Activated naive CD8-positive, alpha-beta T cell treated with anti-CD3 and anti-CD28 coated beads, Interleukin-2, amount 10 ng/mL, durations not matched to agents 7 days and 5 days (primary cell): ENCODE measurements at regions of chr10 and their contacts with region 1.

Region 1: GRCh38 chr10:100998991-100999741 is 442 bp upstream of the LZTS2 start:
- DNase-seq: peak; percentile 92
- ATAC-seq: peak; percentile 61
- H3K4me3 Mint-ChIP-seq: peak overlapping the region; percentile 88
- H3K27ac Mint-ChIP-seq: peak overlapping the region; percentile 94
- H3K4me1 Mint-ChIP-seq: peaks cover 19% of the 10 kb centered on the region
- H3K27me3 Mint-ChIP-seq: no peaks in the 10 kb centered on the region

Region 2: GRCh38 chr10:100986952-100987750 is 12.0 kb before region 1 on chr10 and contains the starts of genes MRPL43 and TWNK:
- POLR2A ChIA-PET with region 1: interaction called, 36 read pairs
- DNase-seq: peak; percentile 85
- ATAC-seq: peak; percentile 92
- H3K4me3 Mint-ChIP-seq: peak within 1 kb of the TSS; percentile 98
- H3K27ac Mint-ChIP-seq: peak within 1 kb of the TSS; percentile 76
- H3K4me1 Mint-ChIP-seq: peaks cover 17% of the 10 kb centered on the region
- H3K27me3 Mint-ChIP-seq: no peaks in the 10 kb centered on the region
- total RNA-seq, gene MRPL43: 55.1 to 57.1 TPM
- total RNA-seq, gene TWNK: 10.8 to 11.0 TPM

Region 3: GRCh38 chr10:101014230-101014884 is 15.2 kb after region 1 on chr10:
- POLR2A ChIA-PET with region 1: interaction called, 15 read pairs
- DNase-seq: peak; percentile 84
- ATAC-seq: no peak
- H3K4me3 Mint-ChIP-seq: no peak overlapping the region
- H3K27ac Mint-ChIP-seq: no peak overlapping the region
- H3K4me1 Mint-ChIP-seq: peaks cover 13% of the 10 kb centered on the region
- H3K27me3 Mint-ChIP-seq: peaks cover 31% of the 10 kb centered on the region

Region 4: GRCh38 chr10:101031128-101031795 is 32.1 kb after region 1 on chr10 and contains the starts of genes PDZD7 and SFXN3:
- POLR2A ChIA-PET with region 1: interaction called, 10 read pairs
- DNase-seq: peak; percentile 98
- ATAC-seq: peak; percentile 88
- H3K4me3 Mint-ChIP-seq: peak within 1 kb of the TSS; percentile 87
- H3K27ac Mint-ChIP-seq: peak within 1 kb of the TSS; percentile 95
- H3K4me1 Mint-ChIP-seq: peaks cover 20% of the 10 kb centered on the region
- H3K27me3 Mint-ChIP-seq: peaks cover 10% of the 10 kb centered on the region
- total RNA-seq, gene PDZD7: 1.1 to 1.4 TPM
- total RNA-seq, gene SFXN3: 66.1 to 68.6 TPM